HepG2 (cell line): ENCODE measurements at regions of chr2 and their contacts with region 1.

Region 1: GRCh38 chr2:202185816-202186221 is 52.6 kb downstream of the SUMO1 start:
- DNase-seq: peak; percentile 15
- ATAC-seq: no peak; the same call in 2 of the 3 replicates
- H3K4me3 ChIP-seq: no peak overlapping the region
- H3K27ac ChIP-seq: no peak overlapping the region
- H3K4me1 ChIP-seq: peaks cover 42% of the 10 kb centered on the region
- H3K27me3 ChIP-seq: no peaks in the 10 kb centered on the region
- CTCF ChIP-seq: no peak
- EP300 ChIP-seq: no peak
- POLR2A ChIP-seq: no peak
- RAD21 ChIP-seq: no peak

Region 2: DNA sequence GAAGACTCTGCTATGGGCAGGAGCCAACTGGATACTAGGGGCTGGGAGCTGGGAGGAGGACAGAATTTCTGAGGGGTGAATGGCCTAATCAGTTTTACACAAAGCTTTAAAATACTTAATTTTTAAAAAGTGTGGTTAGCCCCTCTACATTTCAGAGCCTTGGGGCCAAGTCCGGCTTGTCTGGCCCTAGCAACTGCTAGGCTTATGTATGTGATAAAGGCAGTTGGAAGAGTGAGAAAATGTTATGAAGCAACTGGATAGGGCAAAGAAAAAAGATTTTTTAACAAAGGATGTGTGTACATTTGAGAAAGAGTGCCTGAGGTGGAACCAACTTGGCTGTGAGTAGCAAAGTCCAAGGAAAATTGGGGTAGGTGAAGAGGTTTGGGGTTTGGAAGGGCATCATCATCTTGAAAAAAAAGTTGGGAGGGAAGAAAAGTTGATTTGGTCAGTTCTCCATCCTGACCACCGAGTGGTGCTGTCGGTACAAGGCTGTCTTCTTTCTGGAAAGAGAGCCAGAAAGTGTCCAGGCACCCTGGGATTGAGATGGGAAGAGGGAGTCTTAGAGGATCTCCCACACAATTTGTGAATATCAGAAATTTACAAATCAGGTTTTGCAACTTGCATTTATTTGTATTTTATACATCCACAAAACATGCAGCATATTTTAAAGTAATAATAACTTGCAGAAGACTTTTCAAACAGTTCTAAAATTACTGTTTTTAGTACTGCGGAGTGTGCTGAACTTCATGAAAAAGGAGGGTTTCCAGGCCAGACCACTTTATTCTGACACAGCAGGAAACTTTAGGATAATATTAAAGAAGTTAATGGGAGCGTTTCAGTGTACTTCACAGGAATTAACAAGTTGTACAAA is 390.0 kb before region 1 on chr2:
- CTCF ChIA-PET with region 1: no interaction called
- POLR2A ChIA-PET with region 1: no interaction called
- in situ Hi-C with region 1: loop called (anchors 10 kb)
- intact Hi-C with region 1: no loop called
- DNase-seq: peak; percentile 26
- ATAC-seq: peak; percentile 89
- H3K4me3 ChIP-seq: no peak overlapping the region
- H3K27ac ChIP-seq: no peak overlapping the region
- H3K4me1 ChIP-seq: no peaks in the 10 kb centered on the region
- H3K27me3 ChIP-seq: no peaks in the 10 kb centered on the region
- CTCF ChIP-seq: peak; percentile 81
- EP300 ChIP-seq: no peak
- POLR2A ChIP-seq: no peak
- RAD21 ChIP-seq: no peak

Region 3: DNA sequence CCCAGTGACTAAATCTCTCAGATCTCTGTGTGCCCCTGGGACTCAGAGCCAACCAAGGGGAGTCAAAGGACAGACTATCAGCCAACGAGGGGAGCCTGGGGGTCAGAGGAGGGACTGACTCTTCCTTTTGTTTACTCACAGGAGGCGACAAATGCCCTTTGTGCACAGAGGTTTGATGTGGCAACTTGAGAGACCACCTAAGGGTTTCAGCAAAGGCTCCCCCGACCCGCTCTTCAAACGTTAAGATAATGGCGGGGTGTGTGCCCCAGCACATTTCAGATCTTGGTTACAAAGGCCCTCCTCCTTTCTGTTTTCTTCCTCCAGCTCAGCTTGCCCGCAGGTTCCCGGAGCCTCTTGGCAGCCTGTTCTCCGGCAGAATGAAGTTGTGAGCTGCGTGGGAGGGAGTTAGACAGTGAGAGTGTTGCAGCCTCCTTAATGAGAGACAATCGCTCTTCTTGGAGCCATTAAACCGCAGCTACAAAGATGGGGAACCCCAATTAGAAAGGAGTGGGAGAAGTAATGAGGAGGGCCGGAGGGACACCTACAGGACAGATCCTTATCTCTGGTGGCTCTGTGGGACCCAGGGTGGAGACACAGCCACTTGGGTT is 36.6 kb before region 1 on chr2:
- CTCF ChIA-PET with region 1: no interaction called
- POLR2A ChIA-PET with region 1: no interaction called
- in situ Hi-C with region 1: no loop called
- intact Hi-C with region 1: no loop called
- DNase-seq: no peak
- ATAC-seq: peak; percentile 73
- H3K4me3 ChIP-seq: no peak overlapping the region; a peak in 1 of 6 replicates
- H3K27ac ChIP-seq: no peak overlapping the region
- H3K4me1 ChIP-seq: peaks cover 10% of the 10 kb centered on the region; the same call in 1 of the 2 replicates
- H3K27me3 ChIP-seq: peaks cover 11 to 30% of the 10 kb centered on the region in 2 experiments
- CTCF ChIP-seq: no peak
- EP300 ChIP-seq: no peak
- POLR2A ChIP-seq: no peak
- RAD21 ChIP-seq: no peak